CD14-positive monocyte (primary cell): ENCODE measurements at regions of chr10 and their contacts with region 1.

Region 1: DNA sequence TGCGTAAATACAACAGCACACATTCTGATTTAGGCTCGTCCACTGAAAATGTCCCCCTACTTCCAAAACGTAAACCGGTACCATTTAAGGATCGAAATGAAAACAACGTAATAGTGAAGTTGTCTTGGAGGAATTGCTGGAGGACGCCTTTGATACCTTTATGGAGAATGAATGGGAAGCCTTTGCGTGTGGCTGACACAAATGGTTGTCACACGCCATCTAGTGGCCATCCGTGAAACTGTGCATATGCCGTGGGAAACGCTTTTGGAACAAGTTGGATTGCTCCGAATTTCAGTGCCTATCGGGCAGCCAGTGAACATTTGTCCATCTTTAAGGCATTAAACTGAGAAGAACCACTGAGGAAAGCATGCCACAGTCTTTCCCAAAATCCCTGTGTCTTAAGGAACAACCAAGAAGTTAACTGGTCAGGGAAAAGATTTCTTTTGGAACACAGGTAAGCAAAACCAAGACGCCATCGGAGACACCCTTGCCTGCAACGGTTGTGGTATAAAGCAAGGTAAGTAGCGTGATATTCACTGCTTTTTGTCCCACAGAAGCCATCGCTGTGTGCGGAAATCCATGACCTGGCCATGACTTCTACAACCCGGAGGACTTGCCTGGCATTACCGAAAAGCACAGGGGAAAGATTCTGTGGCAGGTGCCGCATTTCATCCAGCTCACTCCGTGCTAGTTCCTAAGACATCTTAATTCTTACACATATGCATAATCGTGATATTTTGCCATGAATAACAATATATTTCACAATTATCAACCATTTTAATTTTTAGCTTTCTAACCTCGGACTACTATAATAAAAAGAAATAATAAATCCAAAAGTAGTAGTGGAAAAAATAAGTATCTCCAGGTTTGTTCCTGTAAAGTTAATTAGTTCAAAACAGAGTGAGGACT is 100.6 kb downstream of the FAM204A start:
- DNase-seq: peak; percentile 31 to 49 (median 42)
- H3K4me3 ChIP-seq: no peak overlapping the region
- H3K4me3 Mint-ChIP-seq: peak overlapping the region in 1 of 2 donors; percentile 59
- H3K27ac ChIP-seq: no peak overlapping the region
- H3K27ac Mint-ChIP-seq: no peak overlapping the region
- H3K4me1 ChIP-seq: no peaks in the 10 kb centered on the region
- H3K4me1 Mint-ChIP-seq: no peaks in the 10 kb centered on the region
- H3K27me3 ChIP-seq: peaks cover 15 to 41% of the 10 kb centered on the region in 2 donors
- H3K27me3 Mint-ChIP-seq: peaks cover 27 to 39% (median 29%) of the 10 kb centered on the region in 3 donors
- CTCF ChIP-seq: peak; percentile 95

Region 2: GRCh38 chr10:117216611-117217195 is 1024.8 kb before region 1 on chr10:
- intact Hi-C with region 1: loop called (anchors 5 kb)
- DNase-seq: peak; percentile 54 to 71 (median 63)
- H3K4me3 ChIP-seq: peak overlapping the region; percentile 32 to 74 (median 50)
- H3K4me3 Mint-ChIP-seq: peak overlapping the region; percentile 78 to 91
- H3K27ac ChIP-seq: no peak overlapping the region
- H3K27ac Mint-ChIP-seq: peak overlapping the region in 2 of 7 donors; percentile 6 to 52
- H3K4me1 ChIP-seq: peaks cover 12 to 14% of the 10 kb centered on the region in 2 donors
- H3K4me1 Mint-ChIP-seq: peaks cover 15% of the 10 kb centered on the region
- H3K27me3 ChIP-seq: peaks cover 0 to 43% of the 10 kb centered on the region in 2 donors
- H3K27me3 Mint-ChIP-seq: peaks cover 37 to 74% (median 59%) of the 10 kb centered on the region in 3 donors
- CTCF ChIP-seq: peak; percentile 100

Region 3: GRCh38 chr10:117425974-117426566 is 815.4 kb before region 1 on chr10:
- intact Hi-C with region 1: loop called in 1 of 2 experiments (anchors 10 kb)
- DNase-seq: no peak
- H3K4me3 ChIP-seq: no peak overlapping the region
- H3K4me3 Mint-ChIP-seq: no peak overlapping the region
- H3K27ac ChIP-seq: no peak overlapping the region
- H3K27ac Mint-ChIP-seq: no peak overlapping the region
- H3K4me1 ChIP-seq: peaks cover 2% of the 10 kb centered on the region in 2 donors
- H3K4me1 Mint-ChIP-seq: peaks cover 9% of the 10 kb centered on the region
- H3K27me3 ChIP-seq: no peaks in the 10 kb centered on the region
- H3K27me3 Mint-ChIP-seq: peaks cover 0 to 5% (median 4%) of the 10 kb centered on the region in 3 donors
- CTCF ChIP-seq: no peak

Region 4: GRCh38 chr10:117496616-117497028 is 744.9 kb before region 1 on chr10:
- intact Hi-C with region 1: loop called (anchors 1 to 5 kb)
- DNase-seq: peak; percentile 39 to 59 (median 51)
- H3K4me3 ChIP-seq: no peak overlapping the region
- H3K4me3 Mint-ChIP-seq: no peak overlapping the region
- H3K27ac ChIP-seq: no peak overlapping the region
- H3K27ac Mint-ChIP-seq: no peak overlapping the region
- H3K4me1 ChIP-seq: no peaks in the 10 kb centered on the region
- H3K4me1 Mint-ChIP-seq: peaks cover 3% of the 10 kb centered on the region
- H3K27me3 ChIP-seq: peaks cover 5 to 26% of the 10 kb centered on the region in 2 donors
- H3K27me3 Mint-ChIP-seq: peaks cover 20 to 45% (median 35%) of the 10 kb centered on the region in 3 donors
- CTCF ChIP-seq: peak; percentile 92

Region 5: DNA sequence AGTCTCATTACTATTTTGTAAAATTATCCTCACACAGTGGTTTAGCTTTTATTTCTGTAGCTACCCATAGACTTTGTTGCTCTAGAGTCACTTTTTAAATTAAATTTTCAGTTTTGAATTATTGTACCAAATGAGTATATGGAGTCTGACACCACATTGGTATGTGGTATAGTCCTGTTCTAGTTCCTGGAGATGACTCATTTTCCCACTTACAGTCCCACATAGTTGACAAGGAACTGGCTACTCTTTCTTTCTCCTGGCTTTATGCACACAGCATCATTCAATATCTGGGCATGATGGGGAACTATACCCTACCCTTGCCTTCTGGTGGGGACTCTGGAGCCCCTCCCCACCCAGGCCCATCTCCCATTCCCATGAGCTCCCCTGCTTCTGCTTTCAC is 102.2 kb before region 1 on chr10:
- intact Hi-C with region 1: no loop called
- DNase-seq: no peak
- H3K4me3 ChIP-seq: no peak overlapping the region
- H3K4me3 Mint-ChIP-seq: no peak overlapping the region
- H3K27ac ChIP-seq: no peak overlapping the region
- H3K27ac Mint-ChIP-seq: no peak overlapping the region
- H3K4me1 ChIP-seq: no peaks in the 10 kb centered on the region
- H3K4me1 Mint-ChIP-seq: no peaks in the 10 kb centered on the region
- H3K27me3 ChIP-seq: no peaks in the 10 kb centered on the region
- H3K27me3 Mint-ChIP-seq: peaks cover 0 to 6% (median 0%) of the 10 kb centered on the region in 3 donors
- CTCF ChIP-seq: no peak